GM12878 (cell line): ENCODE measurements at regions of chr17 and their contacts with region 1.

Region 1: GRCh38 chr17:75845049-75845860 is 1.1 kb upstream of the UNC13D start:
- DNase-seq: peak; percentile 81
- ATAC-seq: peak; percentile 89
- H3K4me3 ChIP-seq: peak overlapping the region; percentile 77; the same call in 1 of the 2 replicates
- H3K27ac ChIP-seq: peak overlapping the region; percentile 93
- H3K4me1 ChIP-seq: peaks cover 14% of the 10 kb centered on the region
- H3K27me3 ChIP-seq: no peaks in the 10 kb centered on the region
- CTCF ChIP-seq: peak; percentile 71 to 92 (median 89)
- EP300 ChIP-seq: 0 out of 4 replicates have a peak, but pooled peaks of 1 of the 2 experiments have one; percentile 20
- POLR2A ChIP-seq: peak; percentile 59; the same call in 1 of the 2 replicates
- RAD21 ChIP-seq: peak; percentile 50

Region 2: DNA sequence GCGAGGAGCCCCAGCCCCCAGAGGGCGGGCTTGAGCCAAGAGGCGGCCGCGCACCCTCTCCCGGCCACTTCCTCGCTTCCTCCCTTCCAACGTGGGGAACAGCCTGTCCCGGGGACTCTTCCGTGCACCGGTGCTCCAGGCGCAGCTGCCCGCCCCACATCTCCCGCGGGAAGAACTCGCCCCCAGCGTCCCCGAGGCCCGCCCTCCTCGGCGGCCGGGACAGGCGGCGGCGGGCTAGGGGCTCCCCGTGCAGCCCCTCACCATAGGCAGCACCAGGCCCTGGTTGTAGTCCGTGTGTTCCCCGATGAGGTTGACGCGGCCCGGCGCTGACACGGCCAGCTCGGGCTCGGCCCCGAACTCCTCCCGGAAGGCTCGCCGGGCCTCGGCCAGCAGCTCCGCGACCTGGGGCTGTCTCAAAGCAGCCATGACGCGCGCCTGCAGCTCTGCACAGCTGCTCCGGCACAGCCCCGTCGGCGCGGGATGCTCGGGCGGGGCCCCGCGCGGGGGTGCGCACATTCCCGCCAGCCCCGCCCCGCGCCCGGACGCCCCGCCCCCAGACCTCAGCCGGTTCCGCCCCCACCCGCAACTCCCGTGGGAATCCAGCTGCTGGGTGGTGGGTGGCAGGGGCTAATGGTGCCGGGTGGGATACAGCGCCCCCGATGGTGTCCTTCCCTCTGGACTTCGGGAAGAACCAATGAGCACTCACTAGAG is 80.4 kb before region 1 on chr17 and contains the start of gene GALK1:
- CTCF ChIA-PET with region 1: interaction called, 40 read pairs
- POLR2A ChIA-PET with region 1: interaction called, 9 read pairs
- RAD21 ChIA-PET with region 1: interaction called, 21 read pairs
- SMC1A ChIA-PET with region 1: interaction called, 6 read pairs
- in situ Hi-C with region 1: no loop called
- intact Hi-C with region 1: no loop called
- DNase-seq: no peak
- ATAC-seq: peak; percentile 96
- H3K4me3 ChIP-seq: peak within 1 kb of the TSS; percentile 76; the same call in 1 of the 2 replicates
- H3K27ac ChIP-seq: peak within 1 kb of the TSS; percentile 48; the same call in 1 of the 2 replicates
- H3K4me1 ChIP-seq: peaks cover 12% of the 10 kb centered on the region
- H3K27me3 ChIP-seq: no peaks in the 10 kb centered on the region
- CTCF ChIP-seq: peak; percentile 49 to 83 (median 78)
- EP300 ChIP-seq: no peak
- POLR2A ChIP-seq: peak; percentile 83
- RAD21 ChIP-seq: peak; percentile 49
- polyA plus RNA-seq, gene GALK1: 0.21 to 5.9 TPM

Region 3: DNA sequence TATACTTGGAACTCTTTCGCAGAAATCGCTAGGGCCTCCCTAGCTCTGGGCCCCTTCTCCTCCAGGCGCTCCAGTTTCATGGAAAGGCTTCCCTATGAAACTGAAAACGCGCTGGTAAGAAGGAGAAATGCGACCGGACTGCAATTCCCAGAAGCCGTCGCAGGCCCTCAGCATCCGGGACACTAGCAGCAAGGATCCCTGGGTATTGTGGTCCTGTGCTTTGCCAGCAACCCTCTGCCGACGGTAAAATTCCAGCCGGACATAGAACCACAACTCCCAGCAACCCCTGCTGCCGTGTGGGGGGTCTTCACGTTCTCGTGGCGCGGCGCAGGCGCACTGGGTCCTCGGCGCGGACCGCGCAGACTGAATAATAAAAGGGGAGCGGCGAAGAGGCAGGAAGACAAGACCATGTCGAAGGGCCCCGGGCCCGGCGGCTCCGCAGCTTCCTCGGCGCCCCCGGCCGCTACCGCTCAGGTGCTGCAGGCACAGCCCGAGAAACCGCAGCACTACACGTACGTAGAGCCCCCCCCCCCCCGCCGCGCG is 60.7 kb before region 1 on chr17 and contains the start of gene UNK:
- CTCF ChIA-PET with region 1: interaction called, 7 read pairs
- POLR2A ChIA-PET with region 1: interaction called, 31 read pairs
- RAD21 ChIA-PET with region 1: interaction called, 11 read pairs
- SMC1A ChIA-PET with region 1: interaction called, 11 read pairs
- in situ Hi-C with region 1: no loop called
- intact Hi-C with region 1: no loop called
- DNase-seq: peak; percentile 96
- ATAC-seq: peak; percentile 80
- H3K4me3 ChIP-seq: peak within 1 kb of the TSS; percentile 79
- H3K27ac ChIP-seq: peak within 1 kb of the TSS; percentile 97
- H3K4me1 ChIP-seq: peaks cover 22% of the 10 kb centered on the region
- H3K27me3 ChIP-seq: no peaks in the 10 kb centered on the region
- CTCF ChIP-seq: no peak
- EP300 ChIP-seq: no peak
- POLR2A ChIP-seq: no peak
- RAD21 ChIP-seq: no peak
- polyA plus RNA-seq, gene UNK: 8.9 to 11.9 TPM

Region 4: GRCh38 chr17:75827252-75828115 is 17.8 kb before region 1 on chr17:
- CTCF ChIA-PET with region 1: interaction called, 12 read pairs
- POLR2A ChIA-PET with region 1: interaction called, 3 read pairs
- RAD21 ChIA-PET with region 1: interaction called, 4 read pairs
- SMC1A ChIA-PET with region 1: interaction called, 4 read pairs
- in situ Hi-C with region 1: no loop called
- intact Hi-C with region 1: no loop called
- DNase-seq: no peak
- ATAC-seq: peak; percentile 79
- H3K4me3 ChIP-seq: no peak overlapping the region
- H3K27ac ChIP-seq: no peak overlapping the region
- H3K4me1 ChIP-seq: no peaks in the 10 kb centered on the region
- H3K27me3 ChIP-seq: no peaks in the 10 kb centered on the region
- CTCF ChIP-seq: peak; percentile 53 to 73 (median 59)
- EP300 ChIP-seq: no peak
- POLR2A ChIP-seq: peak; percentile 68
- RAD21 ChIP-seq: peak; percentile 36; the same call in 1 of the 2 replicates

Region 5: GRCh38 chr17:75896415-75897159 is 51.3 kb after region 1 on chr17 and contains the start of gene TRIM65:
- CTCF ChIA-PET with region 1: interaction called, 13 read pairs
- POLR2A ChIA-PET with region 1: interaction called, 6 read pairs
- RAD21 ChIA-PET with region 1: interaction called, 13 read pairs
- SMC1A ChIA-PET with region 1: interaction called, 3 read pairs
- in situ Hi-C with region 1: no loop called
- intact Hi-C with region 1: no loop called
- DNase-seq: no peak
- ATAC-seq: peak; percentile 91
- H3K4me3 ChIP-seq: peak within 1 kb of the TSS; percentile 89
- H3K27ac ChIP-seq: peak within 1 kb of the TSS; percentile 72
- H3K4me1 ChIP-seq: peaks cover 6% of the 10 kb centered on the region
- H3K27me3 ChIP-seq: no peaks in the 10 kb centered on the region
- CTCF ChIP-seq: peak; percentile 27 to 74 (median 39); a peak in 4 of 6 replicates
- EP300 ChIP-seq: no peak
- POLR2A ChIP-seq: peak; percentile 93
- RAD21 ChIP-seq: peak; percentile 38; the same call in 1 of the 2 replicates
- polyA plus RNA-seq, gene TRIM65: 1.4 to 3.8 TPM